ENCODE measurements at regions of chr17 and their contacts with region 1.

Region 1: GRCh38 chr17:77011173-77012011 is 129.4 kb upstream of the SEC14L1 start:
- DNase-seq: no peak
- H3K4me3 Mint-ChIP-seq: no peak overlapping the region
- H3K27ac Mint-ChIP-seq: no peak overlapping the region
- H3K4me1 Mint-ChIP-seq: peaks cover 4% of the 10 kb centered on the region
- H3K27me3 Mint-ChIP-seq: peaks cover 30% of the 10 kb centered on the region

Region 2: GRCh38 chr17:76868176-76868668 is 143.2 kb before region 1 on chr17 and contains the start of gene MGAT5B:
- intact Hi-C with region 1: loop called (anchors 5 kb)
- DNase-seq: peak; percentile 72
- H3K4me3 Mint-ChIP-seq: peak within 1 kb of the TSS; percentile 81
- H3K27ac Mint-ChIP-seq: peak within 1 kb of the TSS; percentile 72
- H3K4me1 Mint-ChIP-seq: peaks cover 12% of the 10 kb centered on the region
- H3K27me3 Mint-ChIP-seq: peaks cover 26% of the 10 kb centered on the region
- total RNA-seq, gene MGAT5B: 0.81 and 1.2 TPM in 2 replicates

Region 3: DNA sequence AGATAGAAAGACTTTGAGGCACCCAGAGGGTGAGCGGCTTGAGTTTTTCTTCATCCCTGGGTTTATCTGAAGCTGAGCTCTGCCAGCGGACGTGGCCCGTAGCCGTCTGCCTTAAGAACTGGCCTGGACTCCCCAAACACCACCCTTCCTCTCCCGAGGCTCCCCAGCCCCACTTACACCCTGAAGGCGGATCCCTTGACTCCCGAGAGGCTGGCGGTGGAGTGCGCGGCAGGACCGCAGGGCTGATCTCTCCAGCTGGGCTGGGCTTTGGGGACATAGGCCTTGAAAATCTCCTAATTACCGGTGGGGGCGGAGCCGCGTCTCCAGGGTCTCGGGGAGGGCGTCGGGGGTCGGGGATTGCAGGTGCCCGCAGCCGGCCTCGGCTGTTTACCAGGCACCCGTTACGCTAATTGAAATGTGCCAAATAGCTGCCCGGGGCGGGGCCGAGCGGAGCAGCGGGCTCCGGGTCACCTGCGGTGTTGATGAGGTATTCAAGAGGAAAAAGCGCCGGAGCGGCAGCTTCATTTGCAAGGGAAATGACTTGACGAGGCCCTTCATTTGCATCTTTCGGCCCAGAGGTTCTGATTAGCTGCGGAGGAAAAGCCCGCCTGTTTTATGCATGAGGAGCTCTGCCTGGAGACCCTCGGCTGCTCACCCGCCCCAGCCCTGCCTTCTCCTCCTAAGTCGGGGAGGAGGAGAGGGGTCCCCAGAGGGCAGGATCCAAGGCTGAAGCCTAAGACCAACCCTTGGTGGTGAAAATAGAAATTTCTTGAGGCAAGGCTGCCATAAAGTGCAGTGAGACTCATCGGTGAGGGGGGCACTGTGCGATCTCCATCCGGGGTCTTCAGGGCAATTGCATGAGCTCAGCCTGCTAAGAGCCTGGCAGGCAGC is 42.4 kb before region 1 on chr17:
- intact Hi-C with region 1: loop called (anchors 5 kb)
- DNase-seq: peak; percentile 54
- H3K4me3 Mint-ChIP-seq: peak overlapping the region; percentile 71
- H3K27ac Mint-ChIP-seq: no peak overlapping the region
- H3K4me1 Mint-ChIP-seq: peaks cover 27% of the 10 kb centered on the region
- H3K27me3 Mint-ChIP-seq: peaks cover 29% of the 10 kb centered on the region

Region 4: GRCh38 chr17:77025781-77026180 is 14.4 kb after region 1 on chr17:
- intact Hi-C with region 1: no loop called
- DNase-seq: no peak
- H3K4me3 Mint-ChIP-seq: no peak overlapping the region
- H3K27ac Mint-ChIP-seq: no peak overlapping the region
- H3K4me1 Mint-ChIP-seq: no peaks in the 10 kb centered on the region
- H3K27me3 Mint-ChIP-seq: peaks cover 4% of the 10 kb centered on the region

Region 5: GRCh38 chr17:77054936-77055335 is 43.5 kb after region 1 on chr17:
- intact Hi-C with region 1: loop called (anchors 1 kb)
- DNase-seq: no peak
- H3K4me3 Mint-ChIP-seq: no peak overlapping the region
- H3K27ac Mint-ChIP-seq: no peak overlapping the region
- H3K4me1 Mint-ChIP-seq: peaks cover 5% of the 10 kb centered on the region
- H3K27me3 Mint-ChIP-seq: peaks cover 6% of the 10 kb centered on the region

Region 6: GRCh38 chr17:77068915-77069314 is 57.5 kb after region 1 on chr17:
- intact Hi-C with region 1: loop called (anchors 1 kb)
- DNase-seq: no peak
- H3K4me3 Mint-ChIP-seq: no peak overlapping the region
- H3K27ac Mint-ChIP-seq: no peak overlapping the region
- H3K4me1 Mint-ChIP-seq: no peaks in the 10 kb centered on the region
- H3K27me3 Mint-ChIP-seq: peaks cover 35% of the 10 kb centered on the region

Region 7: DNA sequence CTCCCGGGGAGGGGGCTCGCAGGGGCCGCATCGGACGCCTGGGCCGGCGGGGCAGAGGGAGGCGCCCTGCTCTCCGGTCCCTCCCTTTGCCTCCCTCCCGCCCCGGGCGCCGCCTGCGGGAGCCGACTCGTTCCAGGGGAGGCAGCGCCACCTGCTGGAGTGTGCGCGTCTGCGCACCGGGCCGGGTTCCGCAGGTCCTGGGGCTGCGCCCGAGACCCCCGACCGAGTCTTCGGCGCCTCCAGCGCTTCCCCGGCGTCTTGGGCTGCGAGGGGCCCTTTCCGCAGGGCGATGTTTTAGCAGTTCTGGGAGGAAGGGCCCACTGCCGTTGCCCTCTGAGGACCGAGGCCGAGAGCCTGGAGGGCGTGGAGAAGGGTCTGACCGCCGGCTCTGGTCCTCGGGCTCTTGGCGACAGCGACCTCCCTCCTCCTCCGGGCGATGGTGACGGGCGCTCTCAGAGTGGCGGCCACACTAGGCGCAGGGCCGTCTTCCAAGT is 235.7 kb after region 1 on chr17:
- intact Hi-C with region 1: loop called (anchors 1 kb)
- DNase-seq: peak; percentile 81
- H3K4me3 Mint-ChIP-seq: peak overlapping the region; percentile 58
- H3K27ac Mint-ChIP-seq: no peak overlapping the region
- H3K4me1 Mint-ChIP-seq: peaks cover 24% of the 10 kb centered on the region
- H3K27me3 Mint-ChIP-seq: peaks cover 28% of the 10 kb centered on the region